Activated CD4-positive, alpha-beta T cell treated with anti-CD3 and anti-CD28 coated beads, Interleukin-2, amount 10 ng/mL, durations not matched to agents 24 days and 14 days (primary cell): ENCODE measurements at regions of chr5 and their contacts with region 1.

Region 1: GRCh38 chr5:143679777-143680176 is 132.2 kb upstream of the HMHB1 start:
- DNase-seq: no peak
- H3K4me3 Mint-ChIP-seq: no peak overlapping the region
- H3K27ac Mint-ChIP-seq: peak overlapping the region; percentile 72
- H3K4me1 Mint-ChIP-seq: peaks cover 18% of the 10 kb centered on the region
- H3K27me3 Mint-ChIP-seq: peaks cover 4% of the 10 kb centered on the region

Region 2: GRCh38 chr5:143652108-143652700 is 27.6 kb before region 1 on chr5:
- intact Hi-C with region 1: loop called (anchors 2 kb)
- DNase-seq: no peak
- H3K4me3 Mint-ChIP-seq: no peak overlapping the region
- H3K27ac Mint-ChIP-seq: no peak overlapping the region
- H3K4me1 Mint-ChIP-seq: peaks cover 8% of the 10 kb centered on the region
- H3K27me3 Mint-ChIP-seq: peaks cover 2% of the 10 kb centered on the region

Region 3: DNA sequence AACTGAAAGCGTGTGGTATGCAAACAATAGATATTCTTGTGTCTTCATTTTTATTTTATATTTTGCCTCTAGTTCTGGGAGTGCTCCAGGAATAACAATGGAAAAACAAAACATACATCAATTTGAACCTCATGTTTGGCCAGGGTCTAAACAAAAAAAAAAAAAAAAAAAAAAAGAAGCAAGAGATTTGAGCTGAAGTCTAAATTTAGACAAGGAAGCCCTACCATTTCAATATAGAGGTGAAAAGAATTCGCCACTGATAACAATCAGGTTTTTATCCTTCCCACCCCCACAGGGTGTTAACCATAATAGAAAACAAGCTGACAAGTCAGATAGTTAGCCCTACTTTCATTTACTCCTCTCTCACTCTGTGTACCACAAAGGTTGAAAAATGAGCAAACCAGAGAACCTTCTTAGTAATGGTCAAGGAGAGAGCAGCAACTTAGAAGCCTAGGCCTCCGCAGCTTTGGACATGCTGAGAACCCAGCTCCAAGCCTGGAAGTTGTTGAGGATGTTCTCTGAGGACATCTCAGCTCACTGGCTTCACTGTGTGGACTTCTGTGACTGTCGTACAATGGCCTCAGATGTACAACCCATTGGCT is 14.0 kb after region 1 on chr5:
- intact Hi-C with region 1: loop called (anchors 2 kb)
- DNase-seq: peak; percentile 59
- H3K4me3 Mint-ChIP-seq: no peak overlapping the region
- H3K27ac Mint-ChIP-seq: peak overlapping the region; percentile 27
- H3K4me1 Mint-ChIP-seq: peaks cover 16% of the 10 kb centered on the region
- H3K27me3 Mint-ChIP-seq: peaks cover 7% of the 10 kb centered on the region